PC-3 (cell line): ENCODE measurements at regions of chr15 and their contacts with region 1.

Region 1: DNA sequence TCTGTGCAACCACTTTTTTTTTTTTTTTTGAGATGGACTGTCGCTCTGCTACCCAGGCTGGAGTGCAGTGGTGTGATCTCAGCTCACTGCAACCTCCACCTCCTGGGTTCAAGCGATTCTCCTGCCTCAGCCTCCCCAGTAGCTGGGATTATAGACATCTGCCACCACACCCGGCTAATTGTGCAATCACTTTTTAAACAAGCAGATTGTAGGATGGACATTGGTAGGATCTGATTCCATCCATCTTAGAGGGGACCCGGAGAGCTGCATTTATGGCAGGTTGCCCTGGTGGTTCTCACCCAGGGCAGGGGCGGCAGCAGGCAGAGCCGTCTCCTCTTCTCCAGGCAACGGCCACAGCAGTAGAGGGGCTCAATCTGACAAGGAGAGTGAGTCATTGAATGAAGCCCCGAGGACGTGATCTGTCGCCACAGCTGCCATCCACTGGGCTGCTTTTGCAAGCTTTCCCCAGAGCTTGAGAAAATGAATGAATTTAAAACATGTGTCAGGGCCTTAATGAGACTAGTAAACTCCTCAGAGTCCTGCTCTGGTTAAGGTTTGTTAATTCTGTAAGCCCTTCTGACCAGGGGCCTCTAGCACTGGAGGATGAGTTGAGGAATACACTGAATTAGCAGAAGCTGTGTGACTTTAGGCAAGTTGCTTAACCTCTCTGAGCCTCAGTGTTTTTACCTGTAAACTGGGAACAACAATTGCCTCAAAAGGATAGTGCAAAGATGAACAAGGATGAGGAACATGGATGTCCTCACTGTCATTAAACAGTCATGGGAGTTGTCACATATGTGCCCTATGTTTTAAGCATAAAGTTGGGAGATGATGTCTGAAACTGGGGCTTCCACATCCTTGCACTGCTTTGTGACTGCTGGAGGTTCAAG is 129.1 kb downstream of the ASB7 start:
- DNase-seq: no peak
- ATAC-seq: no peak
- H3K4me3 ChIP-seq: no peak overlapping the region
- H3K27ac ChIP-seq: 0 out of 2 replicates have a peak overlapping the region, but pooled peaks have one; percentile 74
- H3K4me1 ChIP-seq: peaks cover 22% of the 10 kb centered on the region
- H3K27me3 ChIP-seq: no peaks in the 10 kb centered on the region
- CTCF ChIP-seq: no peak

Region 2: DNA sequence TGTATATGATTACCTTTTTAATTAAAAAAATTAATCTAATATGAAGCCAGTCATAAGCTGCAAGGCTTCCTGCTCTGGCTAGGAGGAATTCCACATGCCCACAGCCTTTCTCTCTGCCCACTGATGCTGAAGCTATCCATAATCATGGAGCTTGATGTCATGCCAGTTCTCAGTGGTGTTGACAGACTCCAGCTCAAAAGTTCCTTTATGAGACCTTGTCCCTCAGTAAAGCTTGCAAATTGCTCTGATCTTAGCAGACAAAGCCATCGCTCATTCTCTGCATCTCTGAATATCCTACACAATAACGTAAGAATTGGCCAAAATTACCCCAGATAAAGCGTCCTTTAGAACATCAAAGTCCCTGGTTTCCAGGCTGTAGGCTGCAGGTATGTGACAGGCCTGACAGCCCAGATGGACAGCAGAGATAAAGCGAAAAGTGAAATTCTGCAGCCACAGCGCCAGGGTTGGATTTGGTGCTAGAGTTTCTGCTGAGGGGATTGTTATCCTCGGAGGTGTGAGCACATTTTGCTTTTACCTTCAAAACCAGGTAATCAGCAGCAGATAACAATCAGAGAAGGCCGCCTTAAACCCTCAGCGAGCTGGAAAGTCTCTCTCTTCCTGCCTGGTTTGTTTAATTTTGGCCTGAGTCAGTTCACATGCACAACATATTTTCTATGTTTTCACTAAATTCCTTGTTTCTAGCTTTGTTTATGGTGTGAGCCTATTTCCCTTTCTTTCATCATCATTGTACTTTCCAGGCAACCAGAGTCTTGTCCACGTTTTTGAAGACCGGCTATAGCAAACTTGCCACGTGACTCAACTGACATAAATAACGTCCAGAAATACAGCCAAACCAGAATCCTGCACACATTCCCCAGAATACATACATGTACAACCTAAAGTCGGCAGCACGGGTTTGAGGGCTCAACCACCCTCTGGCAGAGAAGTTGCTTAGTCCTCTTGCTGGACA is 111.5 kb after region 1 on chr15:
- CTCF ChIA-PET with region 1: no interaction called
- POLR2A ChIA-PET with region 1: interaction called, 11 read pairs
- intact Hi-C with region 1: no loop called
- DNase-seq: peak; percentile 25
- ATAC-seq: peak; percentile 35; the same call in 1 of the 2 replicates
- H3K4me3 ChIP-seq: no peak overlapping the region
- H3K27ac ChIP-seq: peak overlapping the region; percentile 70
- H3K4me1 ChIP-seq: peaks cover 46% of the 10 kb centered on the region
- H3K27me3 ChIP-seq: no peaks in the 10 kb centered on the region
- CTCF ChIP-seq: no peak